Naive thymus-derived CD4-positive, alpha-beta T cell (primary cell): ENCODE measurements at regions of chr12 and their contacts with region 1.

Region 1: GRCh38 chr12:7638760-7639555 is 26.8 kb downstream of the APOBEC1 start:
- DNase-seq: peak; percentile 39 to 87 (median 85)
- ATAC-seq: peak; percentile 91
- H3K4me3 ChIP-seq: peak overlapping the region; percentile 34
- H3K4me3 Mint-ChIP-seq: peak overlapping the region; percentile 46 to 88 (median 74)
- H3K27ac ChIP-seq: peak overlapping the region; percentile 37
- H3K27ac Mint-ChIP-seq: peak overlapping the region; percentile 43 to 93 (median 80)
- H3K4me1 ChIP-seq: peaks cover 9 to 10% of the 10 kb centered on the region in 2 donors
- H3K4me1 Mint-ChIP-seq: peaks cover 10 to 47% (median 40%) of the 10 kb centered on the region in 7 donors
- H3K27me3 ChIP-seq: no peaks in the 10 kb centered on the region
- H3K27me3 Mint-ChIP-seq: peaks cover under 1 to 20% (median 7%) of the 10 kb centered on the region in 5 donors

Region 2: GRCh38 chr12:7219599-7220243 is 419.2 kb before region 1 on chr12:
- CTCF ChIA-PET with region 1: interaction called, 11 read pairs
- POLR2A ChIA-PET with region 1: interaction called, 5 read pairs
- intact Hi-C with region 1: loop called (anchors 1 kb)
- DNase-seq: peak; percentile 32 to 75 (median 66)
- ATAC-seq: peak; percentile 79
- H3K4me3 ChIP-seq: no peak overlapping the region
- H3K4me3 Mint-ChIP-seq: no peak overlapping the region
- H3K27ac ChIP-seq: no peak overlapping the region
- H3K27ac Mint-ChIP-seq: no peak overlapping the region
- H3K4me1 ChIP-seq: no peaks in the 10 kb centered on the region
- H3K4me1 Mint-ChIP-seq: peaks cover 0 to 1% (median 0%) of the 10 kb centered on the region in 7 donors
- H3K27me3 ChIP-seq: no peaks in the 10 kb centered on the region
- H3K27me3 Mint-ChIP-seq: peaks cover 0 to 9% (median 0%) of the 10 kb centered on the region in 5 donors

Region 3: GRCh38 chr12:7374423-7375144 is 264.4 kb before region 1 on chr12:
- CTCF ChIA-PET with region 1: no interaction called
- POLR2A ChIA-PET with region 1: no interaction called
- intact Hi-C with region 1: loop called in 1 of 2 experiments (anchors 1 kb)
- DNase-seq: no peak
- ATAC-seq: peak; percentile 38
- H3K4me3 ChIP-seq: no peak overlapping the region
- H3K4me3 Mint-ChIP-seq: no peak overlapping the region
- H3K27ac ChIP-seq: no peak overlapping the region
- H3K27ac Mint-ChIP-seq: no peak overlapping the region
- H3K4me1 ChIP-seq: no peaks in the 10 kb centered on the region
- H3K4me1 Mint-ChIP-seq: peaks cover 0 to 3% (median 0%) of the 10 kb centered on the region in 7 donors
- H3K27me3 ChIP-seq: peaks cover 0 to 5% of the 10 kb centered on the region in 2 donors
- H3K27me3 Mint-ChIP-seq: peaks cover 16 to 32% (median 20%) of the 10 kb centered on the region in 5 donors

Region 4: DNA sequence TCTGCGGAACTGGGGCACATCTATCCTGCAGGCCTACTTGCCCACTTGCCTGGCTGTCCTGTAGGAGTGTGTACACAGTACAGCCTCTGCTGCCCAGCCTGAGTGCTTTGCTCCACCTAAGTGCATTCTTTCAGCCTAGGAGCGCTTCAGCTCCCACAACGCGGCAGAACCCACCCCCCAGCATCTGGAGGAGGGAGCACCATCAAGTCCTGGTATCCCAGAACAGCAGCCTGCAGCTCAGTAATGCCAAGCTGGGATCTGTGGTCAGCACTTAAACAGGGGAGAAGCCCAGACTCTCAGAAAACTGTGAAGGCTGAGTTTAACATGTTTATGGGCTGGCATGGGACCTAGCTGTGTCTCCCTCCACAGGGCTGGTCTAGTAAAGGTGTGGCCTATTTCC is 55.4 kb before region 1 on chr12:
- CTCF ChIA-PET with region 1: interaction called, 4 read pairs
- POLR2A ChIA-PET with region 1: no interaction called
- intact Hi-C with region 1: loop called (anchors 1 kb)
- DNase-seq: no peak
- ATAC-seq: no peak
- H3K4me3 ChIP-seq: no peak overlapping the region
- H3K4me3 Mint-ChIP-seq: no peak overlapping the region
- H3K27ac ChIP-seq: no peak overlapping the region
- H3K27ac Mint-ChIP-seq: no peak overlapping the region
- H3K4me1 ChIP-seq: no peaks in the 10 kb centered on the region
- H3K4me1 Mint-ChIP-seq: peaks cover 0 to 3% (median under 1%) of the 10 kb centered on the region in 7 donors
- H3K27me3 ChIP-seq: no peaks in the 10 kb centered on the region
- H3K27me3 Mint-ChIP-seq: peaks cover 36 to 56% (median 46%) of the 10 kb centered on the region in 5 donors

Region 5: GRCh38 chr12:8026291-8026900 is 387.4 kb after region 1 on chr12:
- CTCF ChIA-PET with region 1: no interaction called
- POLR2A ChIA-PET with region 1: interaction called, 3 read pairs
- intact Hi-C with region 1: loop called in 1 of 2 experiments (anchors 2 kb)
- DNase-seq: peak; percentile 74 to 99 (median 98)
- ATAC-seq: peak; percentile 96
- H3K4me3 ChIP-seq: peak overlapping the region; percentile 79
- H3K4me3 Mint-ChIP-seq: peak overlapping the region; percentile 89 to 100 (median 96)
- H3K27ac ChIP-seq: peak overlapping the region; percentile 99
- H3K27ac Mint-ChIP-seq: peak overlapping the region; percentile 96 to 100 (median 99)
- H3K4me1 ChIP-seq: peaks cover 5 to 8% of the 10 kb centered on the region in 2 donors
- H3K4me1 Mint-ChIP-seq: peaks cover 5 to 36% (median 13%) of the 10 kb centered on the region in 7 donors
- H3K27me3 ChIP-seq: no peaks in the 10 kb centered on the region
- H3K27me3 Mint-ChIP-seq: peaks cover 0 to 2% (median 0%) of the 10 kb centered on the region in 5 donors